ENCODE measurements at regions of chr15 and their contacts with region 1.

Region 1: GRCh38 chr15:79868554-79868953 is 28.3 kb downstream of the MTHFS start:
- DNase-seq: no peak
- ATAC-seq: no peak
- H3K4me3 ChIP-seq: no peak overlapping the region
- H3K4me3 Mint-ChIP-seq: no peak overlapping the region
- H3K27ac ChIP-seq: no peak overlapping the region
- H3K27ac Mint-ChIP-seq: no peak overlapping the region
- H3K4me1 ChIP-seq: peaks cover 6 to 9% of the 10 kb centered on the region in 2 experiments
- H3K4me1 Mint-ChIP-seq: peaks cover 23 to 42% (median 34%) of the 10 kb centered on the region in 3 donors
- H3K27me3 ChIP-seq: no peaks in the 10 kb centered on the region
- H3K27me3 Mint-ChIP-seq: no peaks in the 10 kb centered on the region

Region 2: GRCh38 chr15:79820820-79821219 is 47.7 kb before region 1 on chr15:
- CTCF ChIA-PET with region 1: no interaction called
- POLR2A ChIA-PET with region 1: no interaction called
- DNase-seq: no peak
- ATAC-seq: no peak
- H3K4me3 ChIP-seq: no peak overlapping the region
- H3K4me3 Mint-ChIP-seq: no peak overlapping the region
- H3K27ac ChIP-seq: no peak overlapping the region
- H3K27ac Mint-ChIP-seq: no peak overlapping the region
- H3K4me1 ChIP-seq: no peaks in the 10 kb centered on the region
- H3K4me1 Mint-ChIP-seq: no peaks in the 10 kb centered on the region
- H3K27me3 ChIP-seq: no peaks in the 10 kb centered on the region
- H3K27me3 Mint-ChIP-seq: no peaks in the 10 kb centered on the region

Region 3: DNA sequence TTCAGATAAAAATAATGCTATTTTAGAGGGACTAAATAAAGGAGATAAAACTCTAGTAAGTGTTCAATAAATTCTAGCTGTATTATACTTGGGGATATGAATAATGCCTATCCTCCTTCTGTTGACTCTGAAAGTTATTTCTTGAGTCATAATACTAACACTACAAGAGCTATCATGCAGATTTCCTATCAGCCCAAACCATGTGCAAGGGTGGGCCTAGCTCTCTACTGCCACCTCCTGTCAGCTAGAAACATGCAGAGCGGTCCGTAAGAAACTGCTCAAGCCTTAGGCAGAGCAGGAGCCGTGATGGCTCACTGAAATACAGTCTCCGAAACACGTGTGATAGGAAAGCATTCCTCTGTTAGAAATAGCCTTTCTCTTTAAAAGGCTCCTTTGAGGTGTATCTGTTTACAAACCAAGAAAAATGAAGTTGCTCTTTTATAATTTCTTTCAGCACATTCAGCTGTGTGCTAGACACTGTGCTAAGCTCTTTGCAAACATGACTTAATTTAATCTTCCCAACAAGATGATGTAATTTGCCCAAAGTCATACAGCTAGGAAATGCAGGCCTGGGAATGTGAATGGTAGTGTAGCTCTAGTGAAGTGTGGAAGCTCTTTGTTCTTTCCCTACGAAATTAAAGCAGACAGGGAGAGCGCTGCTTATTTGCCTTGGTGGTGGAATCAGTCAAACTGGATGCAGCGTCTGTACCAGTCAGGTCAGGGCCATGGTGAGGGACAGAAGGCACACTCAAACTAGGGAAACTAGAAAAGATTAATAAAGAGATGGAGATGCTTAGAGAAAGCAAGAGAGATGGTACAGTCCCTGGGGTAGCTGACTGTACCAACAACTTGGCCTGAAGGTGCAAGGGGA is 14.9 kb before region 1 on chr15:
- CTCF ChIA-PET with region 1: interaction called, 7 to 19 read pairs
- POLR2A ChIA-PET with region 1: interaction called in 1 of 2 experiments, 3 read pairs
- DNase-seq: peak; percentile 4 to 78 (median 45)
- ATAC-seq: peak; percentile 88 to 98 (median 93)
- H3K4me3 ChIP-seq: no peak overlapping the region
- H3K4me3 Mint-ChIP-seq: no peak overlapping the region
- H3K27ac ChIP-seq: no peak overlapping the region
- H3K27ac Mint-ChIP-seq: no peak overlapping the region
- H3K4me1 ChIP-seq: peaks cover 0 to 3% of the 10 kb centered on the region in 2 experiments
- H3K4me1 Mint-ChIP-seq: peaks cover 23 to 33% (median 23%) of the 10 kb centered on the region in 3 donors
- H3K27me3 ChIP-seq: no peaks in the 10 kb centered on the region
- H3K27me3 Mint-ChIP-seq: no peaks in the 10 kb centered on the region

Region 4: GRCh38 chr15:79953951-79954444 is 85.4 kb after region 1 on chr15:
- CTCF ChIA-PET with region 1: no interaction called
- POLR2A ChIA-PET with region 1: no interaction called
- DNase-seq: no peak
- ATAC-seq: peak; percentile 55 to 87 (median 74)
- H3K4me3 ChIP-seq: no peak overlapping the region
- H3K4me3 Mint-ChIP-seq: no peak overlapping the region
- H3K27ac ChIP-seq: peak overlapping the region; percentile 39
- H3K27ac Mint-ChIP-seq: peak overlapping the region; percentile 70 to 82
- H3K4me1 ChIP-seq: peaks cover 6 to 8% of the 10 kb centered on the region in 2 experiments
- H3K4me1 Mint-ChIP-seq: peaks cover 18 to 21% (median 21%) of the 10 kb centered on the region in 3 donors
- H3K27me3 ChIP-seq: no peaks in the 10 kb centered on the region
- H3K27me3 Mint-ChIP-seq: no peaks in the 10 kb centered on the region

Measured in T-cell (primary cell).